Endothelial cell of umbilical vein (primary cell): ENCODE measurements at regions of chr10 and their contacts with region 1.

Region 1: DNA sequence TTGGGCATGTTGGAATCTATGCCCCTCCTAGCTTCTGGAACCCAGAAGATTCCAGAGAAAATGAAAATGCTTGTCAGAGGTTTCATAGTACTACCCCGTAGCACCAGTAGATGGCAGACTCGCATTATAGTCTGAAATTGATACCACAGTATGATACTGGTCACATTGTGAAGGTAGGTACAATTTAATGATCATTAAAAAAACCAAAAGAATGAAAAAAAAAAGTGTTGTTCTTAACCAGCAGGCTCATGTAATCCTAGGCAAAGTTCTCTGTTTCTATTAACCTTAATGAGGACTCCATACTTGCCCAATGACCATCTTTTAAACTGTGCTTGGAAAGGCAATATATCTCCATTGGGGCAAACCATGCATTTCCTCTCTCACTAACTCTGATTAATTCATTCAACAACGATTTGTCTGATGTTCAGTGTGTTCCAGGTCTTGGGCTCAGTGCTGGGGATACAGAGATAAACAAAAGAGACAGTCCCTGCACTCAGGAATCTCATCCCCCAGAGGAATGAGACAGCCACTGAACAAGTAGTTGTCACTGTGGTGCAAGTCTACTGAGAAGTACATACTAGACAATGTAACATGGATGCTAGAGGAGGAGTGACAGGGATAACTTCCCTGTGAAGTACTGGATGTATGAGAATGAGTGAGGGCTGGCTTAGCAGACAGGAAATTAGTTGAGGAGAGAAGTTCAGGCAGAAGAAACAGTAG is 223.5 kb upstream of the PHYHIPL start:
- DNase-seq: peak; percentile 47
- H3K4me3 ChIP-seq: no peak overlapping the region
- H3K27ac ChIP-seq: no peak overlapping the region
- H3K4me1 ChIP-seq: no peaks in the 10 kb centered on the region
- H3K27me3 ChIP-seq: no peaks in the 10 kb centered on the region
- CTCF ChIP-seq: peak; percentile 42 to 64
- POLR2A ChIP-seq: no peak

Region 2: GRCh38 chr10:58565271-58565670 is 387.6 kb before region 1 on chr10:
- CTCF ChIA-PET with region 1: no interaction called
- POLR2A ChIA-PET with region 1: no interaction called
- dilution Hi-C with region 1: no loop called
- intact Hi-C with region 1: no loop called
- DNase-seq: no peak
- H3K4me3 ChIP-seq: no peak overlapping the region
- H3K27ac ChIP-seq: no peak overlapping the region
- H3K4me1 ChIP-seq: no peaks in the 10 kb centered on the region
- H3K27me3 ChIP-seq: no peaks in the 10 kb centered on the region
- CTCF ChIP-seq: no peak
- POLR2A ChIP-seq: no peak

Region 3: DNA sequence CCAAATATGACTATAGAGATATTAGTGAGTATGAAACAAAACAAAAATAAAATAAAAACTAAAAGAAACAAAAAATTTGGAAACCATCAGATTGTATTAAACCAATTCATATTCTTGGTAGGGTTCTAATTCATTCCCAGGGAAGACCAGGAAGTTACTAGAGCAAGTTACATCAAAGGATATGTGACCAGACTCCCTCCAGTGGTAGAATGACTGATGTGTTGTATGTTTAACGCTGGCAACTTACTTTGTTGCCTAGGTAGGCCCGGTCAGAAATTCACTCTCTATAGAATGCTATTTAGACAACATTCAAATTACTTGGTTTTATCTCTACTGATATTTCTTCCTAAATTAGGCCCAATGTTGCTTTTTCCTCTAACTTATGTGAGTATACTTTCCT is 228.8 kb after region 1 on chr10:
- CTCF ChIA-PET with region 1: interaction called, 3 read pairs
- POLR2A ChIA-PET with region 1: no interaction called
- dilution Hi-C with region 1: no loop called
- intact Hi-C with region 1: loop called (anchors 1 kb)
- DNase-seq: peak; percentile 43
- H3K4me3 ChIP-seq: no peak overlapping the region
- H3K27ac ChIP-seq: no peak overlapping the region
- H3K4me1 ChIP-seq: peaks cover under 1% of the 10 kb centered on the region
- H3K27me3 ChIP-seq: peaks cover 4 to 11% of the 10 kb centered on the region in 2 experiments
- CTCF ChIP-seq: peak; percentile 8 to 11
- POLR2A ChIP-seq: no peak

Region 4: GRCh38 chr10:59234816-59235429 is 282.0 kb after region 1 on chr10:
- CTCF ChIA-PET with region 1: no interaction called
- POLR2A ChIA-PET with region 1: no interaction called
- dilution Hi-C with region 1: no loop called
- intact Hi-C with region 1: loop called (anchors 5 kb)
- DNase-seq: peak; percentile 41
- H3K4me3 ChIP-seq: no peak overlapping the region
- H3K27ac ChIP-seq: no peak overlapping the region
- H3K4me1 ChIP-seq: no peaks in the 10 kb centered on the region
- H3K27me3 ChIP-seq: no peaks in the 10 kb centered on the region
- CTCF ChIP-seq: peak; percentile 41 to 56
- POLR2A ChIP-seq: no peak

Region 5: GRCh38 chr10:60048091-60048501 is 1095.2 kb after region 1 on chr10:
- CTCF ChIA-PET with region 1: interaction called, 3 read pairs
- POLR2A ChIA-PET with region 1: no interaction called
- dilution Hi-C with region 1: no loop called
- intact Hi-C with region 1: loop called (anchors 10 kb)
- DNase-seq: peak; percentile 18
- H3K4me3 ChIP-seq: no peak overlapping the region
- H3K27ac ChIP-seq: no peak overlapping the region
- H3K4me1 ChIP-seq: no peaks in the 10 kb centered on the region
- H3K27me3 ChIP-seq: no peaks in the 10 kb centered on the region
- CTCF ChIP-seq: no peak
- POLR2A ChIP-seq: no peak